ENCODE measurements at regions of chr3 and their contacts with region 1.

Region 1: DNA sequence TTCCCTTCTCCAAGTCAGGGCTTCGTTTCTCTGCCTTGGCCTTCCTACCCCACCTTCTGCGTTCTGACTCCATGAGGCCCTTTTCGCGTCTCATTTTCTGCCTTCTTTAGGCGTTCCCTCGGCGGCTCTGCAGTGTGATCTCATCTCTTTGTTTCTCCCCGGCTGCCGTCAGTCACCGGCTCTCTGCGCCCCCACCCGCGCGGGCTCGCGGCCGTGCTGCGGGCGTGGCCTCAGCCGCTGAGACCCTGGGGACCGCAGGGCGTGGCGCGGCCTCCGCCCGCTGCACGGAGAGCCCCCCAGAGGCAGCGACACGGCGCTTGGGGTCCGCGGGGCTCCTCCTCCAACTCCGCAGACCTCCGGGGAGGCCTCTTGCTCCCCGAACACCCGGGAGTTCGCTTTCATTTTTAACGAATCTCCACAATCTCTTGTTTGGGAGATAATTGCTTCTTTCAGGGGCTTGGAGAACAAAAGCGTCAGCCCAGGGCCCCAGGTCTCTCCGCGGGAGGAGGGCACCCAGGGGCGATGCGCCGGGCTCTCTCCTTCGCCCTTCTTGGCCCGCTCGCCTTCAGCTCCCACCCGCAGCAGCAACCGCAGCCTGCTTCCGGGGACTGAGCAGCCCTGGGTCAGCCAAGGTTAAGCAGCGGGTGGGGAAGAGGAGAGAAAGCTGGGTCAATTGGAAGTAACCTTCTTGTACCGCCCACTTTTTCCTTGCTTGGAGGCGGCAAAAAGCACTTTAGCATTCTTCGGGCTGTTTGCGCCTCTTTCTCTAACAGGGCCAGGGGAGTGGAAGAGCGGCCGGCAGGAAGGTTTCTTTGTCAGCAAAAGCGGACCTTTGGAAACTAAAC is 35.2 kb downstream of the GAP43 start:
- DNase-seq: peak; percentile 86
- ATAC-seq: peak; percentile 97
- H3K4me3 ChIP-seq: peak overlapping the region; percentile 66 to 93 (median 70)
- H3K4me3 Mint-ChIP-seq: peak overlapping the region; percentile 94
- H3K27ac ChIP-seq: peak overlapping the region; percentile 88 to 93
- H3K27ac Mint-ChIP-seq: peak overlapping the region; percentile 100
- H3K4me1 ChIP-seq: peaks cover 14 to 33% of the 10 kb centered on the region in 2 donors
- H3K4me1 Mint-ChIP-seq: peaks cover 39% of the 10 kb centered on the region
- H3K27me3 ChIP-seq: no peaks in the 10 kb centered on the region
- H3K27me3 Mint-ChIP-seq: no peaks in the 10 kb centered on the region
- CTCF ChIP-seq: no peak

Region 2: DNA sequence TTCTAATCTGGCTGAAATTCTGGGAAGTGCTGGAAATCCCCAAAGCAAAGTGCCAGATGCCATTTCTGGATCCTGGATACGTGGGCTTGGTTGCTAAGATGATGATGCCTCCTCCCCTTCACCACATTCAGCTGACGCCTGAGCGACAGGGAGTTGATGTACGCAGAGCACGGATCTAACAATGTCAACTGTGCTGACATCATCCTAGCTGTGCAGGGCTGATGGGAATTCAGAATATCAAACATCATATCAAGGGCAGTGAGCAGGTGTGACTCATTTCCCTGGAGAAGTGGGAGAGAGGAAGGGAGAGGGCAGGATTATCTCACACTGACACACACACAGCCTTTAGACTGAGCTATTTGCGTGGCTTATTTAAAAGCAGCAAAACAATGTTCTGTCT is 418.8 kb before region 1 on chr3:
- CTCF ChIA-PET with region 1: no interaction called
- POLR2A ChIA-PET with region 1: no interaction called
- intact Hi-C with region 1: no loop called
- DNase-seq: no peak
- ATAC-seq: no peak
- H3K4me3 ChIP-seq: no peak overlapping the region
- H3K4me3 Mint-ChIP-seq: no peak overlapping the region
- H3K27ac ChIP-seq: no peak overlapping the region
- H3K27ac Mint-ChIP-seq: no peak overlapping the region
- H3K4me1 ChIP-seq: no peaks in the 10 kb centered on the region
- H3K4me1 Mint-ChIP-seq: no peaks in the 10 kb centered on the region
- H3K27me3 ChIP-seq: no peaks in the 10 kb centered on the region
- H3K27me3 Mint-ChIP-seq: peaks cover 9% of the 10 kb centered on the region
- CTCF ChIP-seq: no peak

Region 3: DNA sequence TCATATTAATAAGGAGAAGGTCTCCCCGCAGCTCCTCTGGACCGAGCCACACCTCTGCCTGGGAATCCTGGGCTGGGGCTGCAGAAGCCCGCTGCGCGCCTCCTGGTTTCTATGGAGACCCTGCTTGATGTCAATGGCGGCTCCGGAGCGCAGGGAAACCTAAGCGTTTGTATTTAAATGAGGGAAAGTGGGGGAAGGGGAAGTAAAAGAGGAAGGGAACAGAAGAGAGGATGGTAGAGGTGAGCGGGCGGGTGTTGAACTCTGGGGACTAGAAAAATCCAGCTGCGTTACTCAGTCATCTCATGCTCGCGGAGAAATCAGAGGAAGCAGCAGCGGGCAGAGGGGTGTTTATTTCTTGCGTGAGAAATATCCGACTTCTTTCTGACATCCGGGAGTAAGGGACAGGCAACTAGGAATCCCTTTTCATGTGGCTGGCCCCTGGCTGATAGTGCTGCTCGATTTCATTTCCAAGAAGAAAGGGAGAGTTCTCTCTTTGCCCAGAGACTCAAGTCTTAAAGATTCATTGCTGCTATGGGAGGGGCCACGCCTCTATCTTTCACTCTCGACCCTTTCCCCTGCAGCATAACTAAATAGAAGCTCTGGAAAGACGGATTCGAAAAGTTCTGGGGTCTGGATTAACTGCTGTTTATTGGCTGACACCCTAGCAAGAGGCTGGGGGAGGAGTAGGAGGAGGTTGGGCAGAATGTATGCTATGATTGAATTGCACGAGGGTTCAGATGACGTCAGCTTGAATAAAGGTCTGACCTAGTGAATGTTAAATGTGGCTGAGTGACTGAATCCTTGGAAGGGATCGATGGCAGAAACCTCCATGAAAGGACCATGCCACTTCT is 145.8 kb before region 1 on chr3:
- CTCF ChIA-PET with region 1: no interaction called
- POLR2A ChIA-PET with region 1: no interaction called
- intact Hi-C with region 1: loop called (anchors 10 kb)
- DNase-seq: peak; percentile 27
- ATAC-seq: peak; percentile 36
- H3K4me3 ChIP-seq: peak overlapping the region; percentile 23 to 82 (median 62)
- H3K4me3 Mint-ChIP-seq: peak overlapping the region; percentile 94
- H3K27ac ChIP-seq: no peak overlapping the region
- H3K27ac Mint-ChIP-seq: no peak overlapping the region
- H3K4me1 ChIP-seq: peaks cover 17 to 20% of the 10 kb centered on the region in 2 donors
- H3K4me1 Mint-ChIP-seq: peaks cover 23% of the 10 kb centered on the region
- H3K27me3 ChIP-seq: peaks cover 0 to 18% (median 3%) of the 10 kb centered on the region in 4 experiments
- H3K27me3 Mint-ChIP-seq: peaks cover 27% of the 10 kb centered on the region
- CTCF ChIP-seq: no peak

Measured in B cell (primary cell).